ENCODE measurements at regions of chr19 and their contacts with region 1.

Region 1: GRCh38 chr19:32380269-32380668 is 25.3 kb upstream of the DPY19L3 start:
- H3K4me3 Mint-ChIP-seq: no peak overlapping the region
- H3K27ac Mint-ChIP-seq: no peak overlapping the region
- H3K4me1 Mint-ChIP-seq: no peaks in the 10 kb centered on the region
- H3K27me3 Mint-ChIP-seq: peaks cover 72% of the 10 kb centered on the region

Region 2: GRCh38 chr19:32357720-32358119 is 22.5 kb before region 1 on chr19:
- intact Hi-C with region 1: loop called (anchors 1 kb)
- H3K4me3 Mint-ChIP-seq: no peak overlapping the region
- H3K27ac Mint-ChIP-seq: no peak overlapping the region
- H3K4me1 Mint-ChIP-seq: peaks cover 8% of the 10 kb centered on the region
- H3K27me3 Mint-ChIP-seq: peaks cover 87% of the 10 kb centered on the region

Measured in dendritic cell treated with granulocyte-macrophage colony-stimulating factor and Interleukin-4, amounts not matched to agents 40 ng/mL and 50 ng/mL, for 4 days (primary cell).